Activated CD4-positive, alpha-beta T cell treated with anti-CD3 and anti-CD28 coated beads, Interleukin-2, amount 10 ng/mL, durations not matched to agents 24 days and 14 days (primary cell): ENCODE measurements at regions of chr3 and their contacts with region 1.

Region 1: GRCh38 chr3:49673715-49674496 is at the start of gene APEH:
- DNase-seq: peak; percentile 99
- H3K4me3 Mint-ChIP-seq: peak within 1 kb of the TSS; percentile 97
- H3K27ac Mint-ChIP-seq: peak within 1 kb of the TSS; percentile 99
- H3K4me1 Mint-ChIP-seq: peaks cover 19% of the 10 kb centered on the region
- H3K27me3 Mint-ChIP-seq: no peaks in the 10 kb centered on the region
- total RNA-seq, gene APEH: 111 and 117 TPM in 2 replicates

Region 2: DNA sequence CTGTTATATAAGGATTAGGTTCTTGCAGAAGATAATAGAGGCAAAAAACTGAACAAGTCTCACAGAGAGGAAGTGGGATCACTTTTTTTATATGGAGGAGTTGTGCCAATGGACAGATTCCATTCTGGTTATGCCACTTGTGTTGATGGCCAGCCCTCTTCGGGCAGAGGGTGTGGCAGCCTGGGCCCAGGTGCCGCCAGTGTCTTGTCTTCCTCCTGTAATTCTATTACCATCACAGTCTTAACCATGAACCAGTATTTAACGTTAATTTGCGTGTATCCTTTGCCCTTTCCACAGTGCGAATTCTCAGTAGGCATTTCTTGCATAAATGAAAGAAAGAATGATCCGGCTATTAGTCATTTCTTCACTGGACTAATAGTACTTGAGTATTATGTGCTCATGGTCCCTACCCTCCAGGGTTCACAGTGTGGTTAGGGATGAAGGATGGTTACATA is 327.1 kb before region 1 on chr3:
- intact Hi-C with region 1: no loop called
- DNase-seq: no peak
- H3K4me3 Mint-ChIP-seq: no peak overlapping the region
- H3K27ac Mint-ChIP-seq: no peak overlapping the region
- H3K4me1 Mint-ChIP-seq: peaks cover 19% of the 10 kb centered on the region
- H3K27me3 Mint-ChIP-seq: no peaks in the 10 kb centered on the region

Region 3: GRCh38 chr3:49411968-49412631 is 261.8 kb before region 1 on chr3 and contains the starts of genes RHOA and TCTA:
- intact Hi-C with region 1: loop called (anchors 1 kb)
- DNase-seq: peak; percentile 100
- H3K4me3 Mint-ChIP-seq: peak within 1 kb of the TSS; percentile 94
- H3K27ac Mint-ChIP-seq: peak within 1 kb of the TSS; percentile 95
- H3K4me1 Mint-ChIP-seq: peaks cover 59% of the 10 kb centered on the region
- H3K27me3 Mint-ChIP-seq: peaks cover 2% of the 10 kb centered on the region
- total RNA-seq, gene RHOA: 381 and 391 TPM in 2 replicates
- total RNA-seq, gene TCTA: 18.7 and 21.2 TPM in 2 replicates

Region 4: DNA sequence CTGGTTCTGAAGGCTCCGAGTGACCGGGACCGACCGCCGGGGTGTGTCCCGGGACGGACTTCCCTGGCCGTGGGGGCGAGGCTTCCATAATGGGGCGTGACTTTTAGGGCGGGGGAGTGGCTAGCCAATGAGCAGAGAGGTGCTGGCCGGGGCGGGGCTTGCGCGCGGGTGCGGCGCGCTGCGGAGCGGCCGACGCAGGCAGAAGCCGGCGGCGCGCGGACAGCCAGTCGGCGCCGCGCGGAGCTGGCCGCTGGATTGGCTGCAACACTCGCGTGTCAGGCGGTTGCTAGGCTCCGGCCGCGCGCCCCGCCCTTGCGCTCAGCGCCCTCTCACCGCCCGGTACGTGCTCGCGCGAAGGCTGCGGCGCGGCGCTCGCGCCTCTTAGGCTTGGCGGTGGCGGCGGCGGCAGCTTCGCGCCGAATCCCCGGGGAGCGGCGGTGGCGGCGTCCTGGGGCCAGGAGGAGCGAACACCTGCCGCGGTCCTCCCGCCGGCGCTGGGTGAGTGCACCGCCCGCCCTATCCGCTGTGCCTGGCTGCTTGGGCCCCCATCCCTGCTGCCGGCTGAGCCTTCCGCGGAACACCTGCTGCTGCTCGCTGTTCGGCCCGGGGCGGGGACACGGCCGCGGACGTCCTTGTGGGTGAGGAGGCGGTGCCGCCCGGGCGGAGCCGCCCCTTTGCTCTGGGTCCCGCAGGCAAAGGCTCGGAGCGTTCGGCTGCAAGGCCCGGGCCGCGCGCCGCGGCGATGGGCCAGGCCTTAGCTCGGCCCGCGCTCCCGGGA is 203.8 kb before region 1 on chr3 and contains the start of gene DAG1:
- intact Hi-C with region 1: loop called (anchors 2 kb)
- DNase-seq: peak; percentile 99
- H3K4me3 Mint-ChIP-seq: peak within 1 kb of the TSS; percentile 93
- H3K27ac Mint-ChIP-seq: peak within 1 kb of the TSS; percentile 91
- H3K4me1 Mint-ChIP-seq: peaks cover 21% of the 10 kb centered on the region
- H3K27me3 Mint-ChIP-seq: no peaks in the 10 kb centered on the region
- total RNA-seq, gene DAG1: 21.3 and 21.9 TPM in 2 replicates

Region 5: DNA sequence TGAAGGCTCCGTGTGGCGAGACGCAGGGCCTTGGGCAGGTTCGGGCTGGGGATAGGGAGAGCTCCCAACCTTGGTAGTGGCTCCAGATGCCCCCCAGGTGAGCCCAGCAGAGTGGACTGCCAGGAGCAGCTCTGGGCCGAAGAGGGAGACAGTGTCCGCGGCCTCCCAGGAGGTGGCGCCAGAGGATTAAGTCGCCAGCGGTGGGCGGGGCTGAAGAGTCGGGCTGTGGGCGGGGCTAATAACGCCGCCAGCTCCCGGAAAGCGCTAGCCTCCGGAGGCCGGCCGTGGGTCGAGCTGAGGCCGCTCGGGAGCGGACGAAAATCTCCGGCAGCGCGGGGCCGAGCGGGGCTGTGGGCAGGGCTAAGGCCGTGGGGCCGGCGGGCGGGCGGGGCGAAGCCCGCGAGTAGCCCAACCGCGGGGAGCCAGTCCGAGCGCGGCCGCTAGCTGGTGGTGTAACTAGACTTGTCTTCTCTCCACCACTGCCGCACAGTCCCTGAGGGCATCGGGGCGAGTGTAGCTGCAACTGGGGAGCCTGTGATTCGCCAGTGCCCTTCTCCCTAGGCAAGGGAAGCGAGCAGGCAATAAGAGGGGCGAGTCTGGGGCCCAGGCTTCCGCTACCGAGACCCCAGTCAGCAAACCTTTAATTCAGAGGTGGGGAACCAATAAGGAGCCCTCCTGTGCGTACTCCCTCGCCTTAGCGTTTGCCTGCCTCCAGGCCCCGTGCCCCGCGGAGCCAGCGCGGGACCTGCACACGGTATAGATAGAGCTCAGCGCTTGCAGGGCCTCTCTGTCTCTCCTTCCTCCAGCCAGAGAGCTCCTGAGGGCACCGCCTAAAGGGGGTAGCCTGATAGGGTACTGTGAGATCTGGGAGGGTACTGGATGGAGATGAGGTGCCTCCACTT is 134.0 kb before region 1 on chr3:
- intact Hi-C with region 1: loop called (anchors 1 kb)
- DNase-seq: peak; percentile 98
- H3K4me3 Mint-ChIP-seq: peak overlapping the region; percentile 73
- H3K27ac Mint-ChIP-seq: peak overlapping the region; percentile 25
- H3K4me1 Mint-ChIP-seq: peaks cover 5% of the 10 kb centered on the region
- H3K27me3 Mint-ChIP-seq: peaks cover 17% of the 10 kb centered on the region

Region 6: DNA sequence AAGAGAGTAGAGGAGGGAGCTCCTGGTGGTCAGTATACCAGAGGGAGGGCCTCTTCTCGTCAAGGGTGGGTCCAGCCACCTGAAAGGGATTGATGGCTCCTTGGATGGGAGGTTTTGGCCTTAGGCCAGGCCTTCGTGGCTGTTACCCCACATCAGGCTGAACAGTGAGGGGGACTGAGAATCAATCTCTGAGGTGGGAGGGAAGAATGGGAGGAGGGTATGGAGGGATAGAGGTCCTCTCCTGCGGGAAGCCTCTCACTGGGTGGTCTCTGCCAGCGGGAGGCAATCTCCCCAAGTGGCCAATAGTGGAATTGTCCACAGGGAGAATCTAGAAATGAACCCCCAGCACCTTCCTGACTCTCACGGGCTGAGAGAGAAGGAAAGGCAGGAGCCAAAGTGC is 66.1 kb before region 1 on chr3:
- intact Hi-C with region 1: no loop called
- DNase-seq: no peak
- H3K4me3 Mint-ChIP-seq: no peak overlapping the region
- H3K27ac Mint-ChIP-seq: no peak overlapping the region
- H3K4me1 Mint-ChIP-seq: peaks cover 15% of the 10 kb centered on the region
- H3K27me3 Mint-ChIP-seq: no peaks in the 10 kb centered on the region

Region 7: DNA sequence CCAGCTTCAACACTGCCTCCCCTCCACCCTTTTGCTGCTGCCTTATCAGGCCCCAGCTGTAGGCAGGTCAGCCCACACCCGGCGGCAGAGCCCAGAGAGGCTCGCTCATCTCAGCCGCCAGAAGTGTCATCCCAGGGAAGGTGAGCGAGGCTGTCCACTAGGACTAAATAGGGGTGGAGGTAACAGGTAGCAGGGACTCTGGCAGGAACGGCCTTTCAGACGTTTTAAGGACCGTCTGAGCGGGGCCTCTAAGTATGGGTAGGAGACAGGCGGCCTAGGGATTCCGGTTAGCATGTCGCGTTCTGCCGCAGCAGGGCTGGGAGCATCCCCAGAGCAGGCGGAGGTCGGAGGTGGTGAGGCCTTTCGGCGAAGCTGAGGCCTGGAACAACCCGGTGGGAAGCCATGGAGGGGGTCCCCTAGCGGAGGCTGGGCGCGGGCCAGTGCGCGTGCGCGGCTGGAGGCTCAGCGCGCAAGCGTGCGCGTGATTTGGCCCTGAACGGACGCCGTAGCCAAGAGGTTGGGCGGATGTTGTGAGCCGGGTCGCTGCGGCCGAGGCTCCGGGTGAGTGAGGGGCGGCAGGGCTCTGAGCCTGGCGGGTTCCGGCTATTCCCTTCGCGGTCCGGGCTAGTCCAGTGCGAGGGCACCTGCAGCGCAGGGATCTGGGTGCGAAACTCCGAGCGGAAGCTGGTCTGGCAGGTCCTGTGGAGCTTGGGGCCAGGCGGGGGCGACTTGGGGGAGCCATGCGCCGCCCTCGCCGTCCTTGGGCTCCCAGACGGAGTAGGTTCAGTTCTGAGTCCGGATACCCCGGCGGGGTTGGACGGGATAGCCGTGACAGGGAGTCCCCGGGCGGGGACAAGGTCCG is 15.4 kb after region 1 on chr3 and contains the starts of genes MST1 and RNF123:
- intact Hi-C with region 1: loop called (anchors 1 kb)
- DNase-seq: peak; percentile 98
- H3K4me3 Mint-ChIP-seq: peak within 1 kb of the TSS; percentile 99
- H3K27ac Mint-ChIP-seq: peak within 1 kb of the TSS; percentile 86
- H3K4me1 Mint-ChIP-seq: peaks cover 20% of the 10 kb centered on the region
- H3K27me3 Mint-ChIP-seq: peaks cover 4% of the 10 kb centered on the region
- total RNA-seq, gene MST1: 7.5 and 7.6 TPM in 2 replicates
- total RNA-seq, gene RNF123: 42.0 and 45.6 TPM in 2 replicates

Region 8: GRCh38 chr3:49786241-49786958 is 112.5 kb after region 1 on chr3 and contains the start of gene IP6K1:
- intact Hi-C with region 1: loop called (anchors 5 kb)
- DNase-seq: peak; percentile 100
- H3K4me3 Mint-ChIP-seq: peak within 1 kb of the TSS; percentile 93
- H3K27ac Mint-ChIP-seq: peak within 1 kb of the TSS; percentile 94
- H3K4me1 Mint-ChIP-seq: peaks cover 25% of the 10 kb centered on the region
- H3K27me3 Mint-ChIP-seq: peaks cover 5% of the 10 kb centered on the region
- total RNA-seq, gene IP6K1: 39.6 and 42.2 TPM in 2 replicates

Region 9: DNA sequence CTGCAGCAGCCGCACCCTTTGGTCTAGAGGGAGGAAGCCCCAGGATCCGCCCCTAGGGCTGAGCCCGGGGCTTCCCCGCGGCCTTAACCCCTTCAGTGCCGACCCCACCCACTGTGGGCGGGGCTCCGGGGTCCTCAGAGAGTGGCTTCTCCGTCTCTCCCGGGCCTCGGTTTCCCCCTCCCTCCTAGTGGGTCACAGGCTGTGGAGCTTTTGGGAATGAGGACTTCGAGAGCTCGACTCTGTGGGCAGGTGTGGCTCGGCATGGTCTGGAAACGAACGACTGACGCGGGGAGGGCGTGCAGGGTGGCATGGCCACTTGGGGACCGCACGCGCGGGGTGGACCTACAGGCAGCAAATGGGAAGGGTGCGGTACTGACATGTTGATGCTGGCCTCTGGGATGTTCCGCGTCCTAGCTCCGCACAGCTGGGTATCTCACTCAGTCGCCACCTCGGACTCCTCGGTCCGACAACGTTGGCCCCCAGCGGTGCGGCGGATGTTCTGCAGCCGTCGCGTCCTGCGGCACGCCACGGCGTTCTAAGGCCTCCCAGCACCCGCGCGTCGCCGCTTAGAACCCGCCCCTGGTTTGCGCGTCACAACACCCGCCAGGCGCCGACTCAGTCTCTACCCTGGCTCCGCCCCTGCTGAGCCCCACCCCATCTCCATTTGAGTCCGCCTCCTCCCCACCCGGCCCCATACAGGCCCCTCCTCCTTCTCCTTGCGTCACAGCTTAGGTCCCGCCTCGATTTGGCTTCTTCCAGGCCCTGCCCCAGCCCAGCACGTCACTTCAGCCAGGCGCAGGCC is 625.1 kb after region 1 on chr3 and contains the starts of genes HYAL3 and NAA80:
- intact Hi-C with region 1: loop called (anchors 10 kb)
- DNase-seq: peak; percentile 100
- H3K4me3 Mint-ChIP-seq: peak within 1 kb of the TSS; percentile 99
- H3K27ac Mint-ChIP-seq: peak within 1 kb of the TSS; percentile 98
- H3K4me1 Mint-ChIP-seq: peaks cover 22% of the 10 kb centered on the region
- H3K27me3 Mint-ChIP-seq: no peaks in the 10 kb centered on the region
- total RNA-seq, gene HYAL3: 7.1 and 7.3 TPM in 2 replicates
- total RNA-seq, gene NAA80: 17.3 and 20.0 TPM in 2 replicates